ENCODE measurements at regions of chr1 and their contacts with region 1.

Region 1: DNA sequence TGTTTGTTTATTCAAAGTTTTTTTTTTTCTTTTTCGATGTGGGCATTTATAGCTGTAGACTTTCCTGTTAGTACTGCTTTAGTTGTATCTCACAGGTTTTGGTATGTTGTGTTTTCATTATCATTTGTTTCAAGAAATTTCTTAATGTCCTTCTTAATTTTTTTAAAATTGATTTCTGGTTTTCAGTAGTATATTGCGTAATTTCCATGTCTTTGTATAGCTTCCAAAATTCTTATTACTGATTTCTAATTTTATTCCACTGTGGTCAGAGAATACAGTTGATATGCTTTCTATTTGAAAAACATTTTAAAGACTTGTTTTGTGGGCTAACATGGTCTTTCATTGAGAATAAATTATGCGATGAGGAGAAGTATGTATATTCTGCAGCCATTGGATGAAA is 463.2 kb upstream of the B3GALT2 start:
- DNase-seq: no peak
- ATAC-seq: no peak
- H3K4me3 ChIP-seq: no peak overlapping the region
- H3K4me3 Mint-ChIP-seq: no peak overlapping the region
- H3K27ac ChIP-seq: no peak overlapping the region
- H3K27ac Mint-ChIP-seq: no peak overlapping the region
- H3K4me1 ChIP-seq: peaks cover 7% of the 10 kb centered on the region
- H3K4me1 Mint-ChIP-seq: no peaks in the 10 kb centered on the region
- H3K27me3 ChIP-seq: no peaks in the 10 kb centered on the region
- H3K27me3 Mint-ChIP-seq: no peaks in the 10 kb centered on the region
- CTCF ChIP-seq: no peak

Region 2: GRCh38 chr1:193144361-193144938 is 505.1 kb before region 1 on chr1:
- CTCF ChIA-PET with region 1: no interaction called
- POLR2A ChIA-PET with region 1: no interaction called
- intact Hi-C with region 1: no loop called
- DNase-seq: no peak
- ATAC-seq: no peak
- H3K4me3 ChIP-seq: no peak overlapping the region
- H3K4me3 Mint-ChIP-seq: no peak overlapping the region
- H3K27ac ChIP-seq: no peak overlapping the region
- H3K27ac Mint-ChIP-seq: no peak overlapping the region
- H3K4me1 ChIP-seq: no peaks in the 10 kb centered on the region
- H3K4me1 Mint-ChIP-seq: peaks cover 34% of the 10 kb centered on the region
- H3K27me3 ChIP-seq: no peaks in the 10 kb centered on the region
- H3K27me3 Mint-ChIP-seq: no peaks in the 10 kb centered on the region
- CTCF ChIP-seq: no peak

Region 3: GRCh38 chr1:193631306-193631705 is 18.3 kb before region 1 on chr1:
- CTCF ChIA-PET with region 1: no interaction called
- POLR2A ChIA-PET with region 1: no interaction called
- intact Hi-C with region 1: loop called in 1 of 2 experiments (anchors 1 kb)
- DNase-seq: no peak
- ATAC-seq: no peak
- H3K4me3 ChIP-seq: no peak overlapping the region
- H3K4me3 Mint-ChIP-seq: no peak overlapping the region
- H3K27ac ChIP-seq: no peak overlapping the region
- H3K27ac Mint-ChIP-seq: no peak overlapping the region
- H3K4me1 ChIP-seq: peaks cover 6% of the 10 kb centered on the region
- H3K4me1 Mint-ChIP-seq: peaks cover 10% of the 10 kb centered on the region
- H3K27me3 ChIP-seq: no peaks in the 10 kb centered on the region
- H3K27me3 Mint-ChIP-seq: no peaks in the 10 kb centered on the region
- CTCF ChIP-seq: no peak

Region 4: GRCh38 chr1:193674292-193674944 is 24.8 kb after region 1 on chr1:
- CTCF ChIA-PET with region 1: no interaction called
- POLR2A ChIA-PET with region 1: no interaction called
- intact Hi-C with region 1: no loop called
- DNase-seq: no peak
- ATAC-seq: no peak
- H3K4me3 ChIP-seq: no peak overlapping the region
- H3K4me3 Mint-ChIP-seq: no peak overlapping the region
- H3K27ac ChIP-seq: no peak overlapping the region
- H3K27ac Mint-ChIP-seq: no peak overlapping the region
- H3K4me1 ChIP-seq: no peaks in the 10 kb centered on the region
- H3K4me1 Mint-ChIP-seq: no peaks in the 10 kb centered on the region
- H3K27me3 ChIP-seq: no peaks in the 10 kb centered on the region
- H3K27me3 Mint-ChIP-seq: no peaks in the 10 kb centered on the region
- CTCF ChIP-seq: no peak